ENCODE measurements at regions of chr3 and their contacts with region 1.

Region 1: DNA sequence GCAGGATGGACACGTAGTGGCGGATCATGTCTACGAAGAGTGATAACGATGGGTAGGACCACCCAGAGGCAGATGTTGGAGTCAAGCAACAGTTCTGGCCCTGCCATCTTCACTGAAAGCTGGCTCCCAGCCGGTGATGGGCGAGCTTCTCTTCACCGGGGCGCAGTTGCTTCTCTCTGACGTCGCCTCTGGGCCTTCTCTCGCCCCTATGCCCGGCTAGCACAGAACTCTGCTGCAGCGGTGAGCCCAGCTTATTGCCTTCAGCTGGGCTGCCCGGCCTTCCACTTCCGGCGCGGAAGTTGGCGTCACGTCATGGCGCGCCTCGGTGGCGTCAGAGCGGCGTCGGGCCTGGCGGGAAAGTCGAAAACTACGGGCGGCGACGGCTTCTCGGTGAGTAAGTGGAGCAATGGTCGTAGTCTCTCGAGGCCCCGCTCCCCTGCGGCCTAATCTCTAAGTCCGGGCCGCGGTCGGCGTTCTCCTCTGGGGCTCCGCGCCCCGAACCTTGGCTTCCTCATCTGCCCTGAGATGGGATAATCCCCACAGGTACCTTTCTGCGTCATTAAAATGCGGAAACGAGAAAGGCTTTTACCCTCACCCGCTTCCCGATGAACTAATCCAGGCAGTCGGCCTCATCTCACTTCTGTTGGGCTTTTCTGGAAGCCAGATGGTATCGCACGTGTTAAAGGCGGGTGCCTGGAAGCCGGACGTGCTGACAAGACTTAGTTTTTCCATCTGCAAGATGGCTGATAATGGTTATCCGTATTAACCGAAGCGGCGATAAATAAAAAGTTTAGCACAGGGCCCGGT is at the start of gene FANCD2:
- DNase-seq: peak; percentile 93 to 97
- ATAC-seq: peak; percentile 95
- H3K4me3 ChIP-seq: peak within 1 kb of the TSS; percentile 45 to 72
- H3K27ac ChIP-seq: peak within 1 kb of the TSS in 1 of 2 donors; percentile 17
- H3K4me1 ChIP-seq: no peaks in the 10 kb centered on the region
- H3K27me3 ChIP-seq: no peaks in the 10 kb centered on the region
- total RNA-seq, gene FANCD2: 1.9 to 5.4 TPM

Region 2: DNA sequence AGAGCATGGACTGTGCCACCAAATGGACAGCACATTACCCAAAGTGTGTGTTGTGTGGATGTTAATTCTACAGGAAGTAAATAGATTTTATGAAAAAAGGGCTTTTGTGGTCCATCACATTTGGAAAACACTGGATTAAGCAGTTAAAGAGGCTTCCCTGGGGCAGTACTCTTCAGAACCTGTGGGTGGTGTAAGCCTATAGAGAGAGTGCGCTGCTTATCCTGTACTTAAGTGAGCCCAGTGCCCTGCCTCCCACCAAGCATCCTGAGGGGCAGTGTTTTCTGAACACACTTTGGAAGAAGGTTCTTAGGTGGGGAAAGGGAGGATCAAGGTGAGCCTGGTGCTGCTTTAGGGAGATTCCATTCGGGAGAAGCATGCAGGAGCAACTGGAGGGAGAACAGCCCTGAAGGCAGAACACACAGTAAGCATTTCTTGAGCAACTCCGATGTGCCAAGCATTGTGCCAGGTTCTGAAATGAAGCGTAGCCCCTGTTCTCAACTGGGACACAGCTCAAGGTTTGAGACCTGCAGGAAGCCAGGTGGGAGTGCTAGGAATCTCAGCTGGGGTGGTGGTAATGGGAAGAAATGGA is 205.2 kb before region 1 on chr3:
- intact Hi-C with region 1: no loop called
- DNase-seq: no peak
- ATAC-seq: no peak
- H3K4me3 ChIP-seq: no peak overlapping the region
- H3K27ac ChIP-seq: no peak overlapping the region
- H3K4me1 ChIP-seq: no peaks in the 10 kb centered on the region
- H3K27me3 ChIP-seq: no peaks in the 10 kb centered on the region

Region 3: GRCh38 chr3:9890249-9891071 is 135.8 kb before region 1 on chr3 and contains the start of gene JAGN1:
- intact Hi-C with region 1: no loop called
- DNase-seq: peak; percentile 91 to 97
- ATAC-seq: peak; percentile 96
- H3K4me3 ChIP-seq: peak within 1 kb of the TSS; percentile 66 to 87
- H3K27ac ChIP-seq: peak within 1 kb of the TSS in 1 of 2 donors; percentile 98
- H3K4me1 ChIP-seq: peaks cover 0 to 4% of the 10 kb centered on the region in 2 donors
- H3K27me3 ChIP-seq: no peaks in the 10 kb centered on the region
- total RNA-seq, gene JAGN1: 19.8 to 22.7 TPM

Region 4: DNA sequence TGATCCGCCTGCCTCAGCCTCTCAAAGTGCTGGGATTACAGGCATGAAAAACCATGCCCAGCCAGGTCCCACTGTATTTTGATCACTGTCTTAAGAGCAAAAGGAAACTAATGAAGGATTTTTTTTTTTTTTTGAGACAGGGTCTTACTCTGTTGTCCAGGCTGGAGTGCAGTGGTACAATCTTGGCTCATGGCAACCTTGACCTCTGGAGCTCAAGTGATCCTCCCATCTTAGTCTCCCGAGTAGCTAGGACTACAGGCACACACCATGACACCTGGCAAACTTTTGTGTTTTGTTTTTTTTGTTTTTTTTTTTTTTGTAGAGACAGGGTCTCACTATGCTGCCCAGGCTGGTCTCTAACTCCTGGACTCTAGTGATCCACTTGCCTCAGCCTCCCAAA is 46.0 kb before region 1 on chr3:
- intact Hi-C with region 1: loop called in 1 of 2 experiments (anchors 5 kb)
- DNase-seq: no peak
- ATAC-seq: no peak
- H3K4me3 ChIP-seq: no peak overlapping the region
- H3K27ac ChIP-seq: no peak overlapping the region
- H3K4me1 ChIP-seq: no peaks in the 10 kb centered on the region
- H3K27me3 ChIP-seq: no peaks in the 10 kb centered on the region

Region 5: GRCh38 chr3:10115326-10116137 is 89.2 kb after region 1 on chr3 and contains the start of gene BRK1:
- intact Hi-C with region 1: loop called in 1 of 2 experiments (anchors 10 kb)
- DNase-seq: peak; percentile 97 to 98
- ATAC-seq: peak; percentile 100
- H3K4me3 ChIP-seq: peak within 1 kb of the TSS; percentile 63 to 71
- H3K27ac ChIP-seq: peak within 1 kb of the TSS in 1 of 2 donors; percentile 55
- H3K4me1 ChIP-seq: no peaks in the 10 kb centered on the region
- H3K27me3 ChIP-seq: no peaks in the 10 kb centered on the region
- total RNA-seq, gene BRK1: 103 to 108 TPM

Region 6: GRCh38 chr3:10142707-10143566 is 116.7 kb after region 1 on chr3:
- intact Hi-C with region 1: loop called in 1 of 2 experiments (anchors 10 kb)
- DNase-seq: no peak
- ATAC-seq: no peak
- H3K4me3 ChIP-seq: peak overlapping the region in 1 of 2 donors; percentile 3
- H3K27ac ChIP-seq: no peak overlapping the region
- H3K4me1 ChIP-seq: no peaks in the 10 kb centered on the region
- H3K27me3 ChIP-seq: no peaks in the 10 kb centered on the region

Region 7: GRCh38 chr3:10224784-10225665 is 198.7 kb after region 1 on chr3:
- intact Hi-C with region 1: loop called in 1 of 2 experiments (anchors 5 kb)
- DNase-seq: peak; percentile 76 to 85
- ATAC-seq: peak; percentile 90
- H3K4me3 ChIP-seq: no peak overlapping the region
- H3K27ac ChIP-seq: peak overlapping the region in 1 of 2 donors; percentile 32
- H3K4me1 ChIP-seq: no peaks in the 10 kb centered on the region
- H3K27me3 ChIP-seq: no peaks in the 10 kb centered on the region

Measured in aorta (tissue), 5 donors.